Heart left ventricle (tissue), 16 donors: ENCODE measurements at regions of chr1 and their contacts with region 1.

Region 1: DNA sequence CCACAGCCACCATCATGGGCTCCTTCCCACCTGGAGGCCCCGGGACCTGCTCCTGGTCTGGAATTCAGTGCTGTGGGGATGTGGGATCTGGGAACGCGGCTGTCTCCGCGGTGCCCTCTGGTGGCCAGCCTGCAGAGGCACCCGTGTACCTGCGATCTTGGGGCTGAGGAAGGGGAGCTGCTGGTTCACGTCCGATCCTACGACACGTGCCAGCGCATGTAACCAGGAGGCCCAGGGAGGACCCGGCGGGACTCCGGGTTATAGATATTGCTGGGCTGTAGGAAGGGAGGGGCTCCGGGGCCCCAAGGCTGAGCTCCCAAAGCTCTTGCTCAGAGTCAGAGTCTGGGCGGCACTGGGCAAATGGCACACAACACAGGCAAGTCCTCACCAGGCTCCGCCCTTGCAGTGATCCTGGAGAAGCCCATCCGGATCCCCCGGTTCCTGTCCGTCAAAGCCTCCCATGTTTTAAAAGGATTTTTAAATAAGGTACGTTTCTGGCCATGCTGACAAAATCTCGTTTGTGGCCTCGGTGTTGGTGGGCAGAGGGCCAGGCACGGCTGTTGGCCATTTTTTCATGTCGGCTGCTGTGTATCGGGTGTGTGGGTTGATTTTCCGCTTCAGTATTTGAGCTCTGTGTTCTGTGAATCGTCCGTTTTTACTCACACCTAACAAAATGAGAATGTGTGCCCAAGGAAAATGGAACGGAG is 20.1 kb downstream of the FAAP20 start:
- DNase-seq: peak; percentile 58 to 80 (median 61)
- ATAC-seq: peak; percentile 33 to 88 (median 70)
- H3K4me3 ChIP-seq: peak overlapping the region; percentile 7 to 63 (median 44)
- H3K27ac ChIP-seq: peak overlapping the region in 3 of 12 donors; percentile 12 to 60 (median 28)
- H3K4me1 ChIP-seq: peaks cover 0 to 10% (median 4%) of the 10 kb centered on the region in 12 donors
- H3K27me3 ChIP-seq: no peaks in the 10 kb centered on the region
- CTCF ChIP-seq: peak; percentile 82 to 97 (median 88)
- POLR2A ChIP-seq: no peak

Region 2: GRCh38 chr1:1943834-1944570 is 230.5 kb before region 1 on chr1:
- intact Hi-C with region 1: loop called in 2 of 10 experiments (anchors 10 kb)
- DNase-seq: peak in 3 of 5 donors; percentile 45 to 78 (median 49)
- ATAC-seq: peak; percentile 56 to 87 (median 79)
- H3K4me3 ChIP-seq: peak overlapping the region in 1 of 12 donors; percentile 29
- H3K27ac ChIP-seq: no peak overlapping the region
- H3K4me1 ChIP-seq: peaks cover 0 to 17% (median 5%) of the 10 kb centered on the region in 12 donors
- H3K27me3 ChIP-seq: peaks cover 0 to 17% (median 0%) of the 10 kb centered on the region in 9 donors
- CTCF ChIP-seq: peak; percentile 75 to 92 (median 84)
- POLR2A ChIP-seq: no peak

Region 3: DNA sequence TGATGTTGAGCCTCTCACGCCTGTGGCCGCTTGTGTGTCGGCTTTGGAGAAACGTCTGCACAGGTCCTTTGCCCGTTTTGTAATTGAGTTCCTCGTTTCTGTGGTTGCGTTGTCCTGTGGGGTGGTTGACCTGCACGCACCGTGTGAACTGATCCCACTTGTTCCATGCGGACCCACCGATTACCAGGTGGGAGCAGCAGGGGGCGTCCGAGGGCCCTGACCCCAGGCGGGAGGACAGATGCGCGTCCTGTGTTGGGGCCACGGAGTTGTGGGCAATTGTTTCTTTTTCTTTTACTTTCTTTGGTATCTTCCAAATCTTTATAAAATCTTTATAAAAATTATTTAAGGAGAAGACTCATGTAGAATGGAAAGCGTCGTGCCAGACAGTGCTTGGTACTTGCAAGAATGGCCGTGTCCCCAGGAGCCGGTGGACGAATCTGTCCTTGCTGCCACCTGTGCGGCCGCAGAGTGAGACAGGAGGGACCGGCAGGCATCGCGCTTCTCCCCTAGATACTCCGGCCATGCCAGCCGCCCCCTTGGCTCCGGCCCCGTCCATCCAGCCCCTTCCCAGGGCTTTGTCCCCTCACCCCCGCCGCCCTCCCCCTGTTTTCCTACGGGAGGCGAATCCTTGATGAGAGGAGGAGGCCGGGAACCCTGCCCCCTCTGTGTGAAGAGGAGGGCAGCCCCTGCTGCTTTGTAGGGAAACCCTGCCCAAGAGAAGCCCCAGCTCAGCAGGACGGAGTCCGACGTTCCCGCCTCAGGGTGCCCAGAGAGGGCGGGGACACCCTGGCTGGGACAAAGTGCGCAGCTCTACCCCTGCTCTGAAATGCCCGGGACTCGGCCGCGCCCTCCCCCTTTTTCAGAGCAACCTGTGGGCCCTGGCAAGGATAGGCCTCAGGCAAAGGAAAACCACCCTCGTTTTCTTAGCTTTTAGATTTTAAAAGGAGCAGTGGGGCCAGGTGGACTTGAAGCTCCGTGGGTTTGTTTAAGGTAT is 82.6 kb before region 1 on chr1:
- intact Hi-C with region 1: loop called in 2 of 10 experiments (anchors 5 to 10 kb)
- DNase-seq: peak in 4 of 5 donors; percentile 31 to 77 (median 48)
- ATAC-seq: peak in 1 of 4 donors; percentile 48
- H3K4me3 ChIP-seq: no peak overlapping the region
- H3K27ac ChIP-seq: no peak overlapping the region
- H3K4me1 ChIP-seq: peaks cover 0 to 8% (median 0%) of the 10 kb centered on the region in 12 donors
- H3K27me3 ChIP-seq: no peaks in the 10 kb centered on the region
- CTCF ChIP-seq: peak; percentile 34 to 70 (median 54)
- POLR2A ChIP-seq: no peak

Region 4: GRCh38 chr1:2229037-2229864 is 54.8 kb after region 1 on chr1:
- intact Hi-C with region 1: no loop called
- DNase-seq: peak; percentile 70 to 91 (median 81)
- ATAC-seq: peak; percentile 13 to 30 (median 18)
- H3K4me3 ChIP-seq: peak overlapping the region; percentile 66 to 92 (median 75)
- H3K27ac ChIP-seq: peak overlapping the region; percentile 72 to 89 (median 84)
- H3K4me1 ChIP-seq: peaks cover 11 to 63% (median 48%) of the 10 kb centered on the region in 12 donors
- H3K27me3 ChIP-seq: no peaks in the 10 kb centered on the region
- CTCF ChIP-seq: peak in 3 of 12 donors; percentile 17 to 36 (median 31)
- POLR2A ChIP-seq: no peak